ENCODE measurements at regions of chr1 and their contacts with region 1.

Region 1: GRCh38 chr1:17723684-17724083 is 31.4 kb upstream of the ACTL8 start:
- DNase-seq: no peak
- H3K4me3 ChIP-seq: no peak overlapping the region
- H3K27ac ChIP-seq: no peak overlapping the region
- H3K4me1 ChIP-seq: no peaks in the 10 kb centered on the region
- H3K27me3 ChIP-seq: no peaks in the 10 kb centered on the region
- CTCF ChIP-seq: peak; percentile 48 to 62 (median 49)
- EP300 ChIP-seq: no peak
- POLR2A ChIP-seq: no peak
- RAD21 ChIP-seq: peak; percentile 27 to 54; a peak in 3 of 4 replicates

Region 2: GRCh38 chr1:17690906-17691634 is 32.6 kb before region 1 on chr1:
- CTCF ChIA-PET with region 1: interaction called, 13 read pairs
- POLR2A ChIA-PET with region 1: no interaction called
- DNase-seq: no peak
- H3K4me3 ChIP-seq: no peak overlapping the region
- H3K27ac ChIP-seq: no peak overlapping the region
- H3K4me1 ChIP-seq: peaks cover 0 to 6% (median 0%) of the 10 kb centered on the region in 4 experiments; a peak in 1 of 7 replicates
- H3K27me3 ChIP-seq: no peaks in the 10 kb centered on the region
- CTCF ChIP-seq: no peak
- EP300 ChIP-seq: no peak
- POLR2A ChIP-seq: no peak
- RAD21 ChIP-seq: no peak

Region 3: GRCh38 chr1:17706445-17706844 is 17.2 kb before region 1 on chr1:
- CTCF ChIA-PET with region 1: interaction called, 14 read pairs
- POLR2A ChIA-PET with region 1: interaction called, 3 read pairs
- DNase-seq: no peak
- H3K4me3 ChIP-seq: no peak overlapping the region
- H3K27ac ChIP-seq: no peak overlapping the region
- H3K4me1 ChIP-seq: no peaks in the 10 kb centered on the region
- H3K27me3 ChIP-seq: peaks cover 0 to 2% (median 0%) of the 10 kb centered on the region in 4 experiments; a peak in 2 of 7 replicates
- CTCF ChIP-seq: no peak
- EP300 ChIP-seq: no peak
- POLR2A ChIP-seq: no peak
- RAD21 ChIP-seq: no peak

Region 4: GRCh38 chr1:17711941-17712340 is 11.7 kb before region 1 on chr1:
- CTCF ChIA-PET with region 1: interaction called, 14 read pairs
- POLR2A ChIA-PET with region 1: no interaction called
- DNase-seq: no peak
- H3K4me3 ChIP-seq: no peak overlapping the region
- H3K27ac ChIP-seq: no peak overlapping the region
- H3K4me1 ChIP-seq: no peaks in the 10 kb centered on the region
- H3K27me3 ChIP-seq: peaks cover 0 to 2% (median 0%) of the 10 kb centered on the region in 4 experiments; a peak in 1 of 7 replicates
- CTCF ChIP-seq: no peak
- EP300 ChIP-seq: no peak
- POLR2A ChIP-seq: no peak
- RAD21 ChIP-seq: no peak

Region 5: GRCh38 chr1:17742583-17742982 is 18.9 kb after region 1 on chr1:
- CTCF ChIA-PET with region 1: interaction called, 13 read pairs
- POLR2A ChIA-PET with region 1: no interaction called
- DNase-seq: no peak
- H3K4me3 ChIP-seq: no peak overlapping the region
- H3K27ac ChIP-seq: no peak overlapping the region
- H3K4me1 ChIP-seq: peaks cover 0 to 2% (median 0%) of the 10 kb centered on the region in 4 experiments; a peak in 2 of 7 replicates
- H3K27me3 ChIP-seq: no peaks in the 10 kb centered on the region
- CTCF ChIP-seq: no peak
- EP300 ChIP-seq: no peak
- POLR2A ChIP-seq: no peak
- RAD21 ChIP-seq: no peak

Region 6: DNA sequence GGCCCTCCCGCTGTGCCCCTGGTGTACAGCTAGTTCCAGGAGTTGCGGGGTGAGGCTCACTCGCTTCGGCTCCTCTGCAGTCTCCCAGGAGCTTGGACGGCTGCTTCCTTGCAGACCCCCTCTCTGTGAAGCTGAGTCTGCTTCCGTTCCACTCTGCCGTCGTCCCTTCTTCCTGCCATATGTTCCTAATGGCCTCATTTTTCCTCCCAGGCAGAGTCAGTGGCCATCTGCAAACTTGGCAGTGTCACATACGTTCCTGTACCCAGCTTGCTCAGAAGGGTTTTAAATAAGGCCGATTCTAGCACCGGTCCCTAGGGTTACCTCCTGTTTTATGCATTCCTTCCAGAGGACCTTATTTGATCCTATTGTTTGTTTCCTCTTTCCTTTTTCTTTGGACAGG is 52.7 kb after region 1 on chr1:
- CTCF ChIA-PET with region 1: interaction called, 12 read pairs
- POLR2A ChIA-PET with region 1: no interaction called
- DNase-seq: no peak
- H3K4me3 ChIP-seq: no peak overlapping the region
- H3K27ac ChIP-seq: no peak overlapping the region
- H3K4me1 ChIP-seq: no peaks in the 10 kb centered on the region; a peak in 2 of 7 replicates
- H3K27me3 ChIP-seq: no peaks in the 10 kb centered on the region
- CTCF ChIP-seq: no peak
- EP300 ChIP-seq: no peak
- POLR2A ChIP-seq: no peak
- RAD21 ChIP-seq: no peak

Region 7: GRCh38 chr1:17826165-17826488 is 102.4 kb after region 1 on chr1:
- CTCF ChIA-PET with region 1: interaction called, 18 read pairs
- POLR2A ChIA-PET with region 1: no interaction called
- DNase-seq: peak in 1 of 2 experiments; percentile 90
- H3K4me3 ChIP-seq: no peak overlapping the region
- H3K27ac ChIP-seq: no peak overlapping the region
- H3K4me1 ChIP-seq: no peaks in the 10 kb centered on the region
- H3K27me3 ChIP-seq: 0 out of 7 replicates have a peak, but pooled peaks cover 0 to 2% (median 0%) of the 10 kb centered on the region in 4 experiments
- CTCF ChIP-seq: peak; percentile 77 to 82 (median 78)
- EP300 ChIP-seq: no peak
- POLR2A ChIP-seq: no peak
- RAD21 ChIP-seq: peak; percentile 69 to 76

Measured in H1 (cell line).